ENCODE measurements at regions of chr3 and their contacts with region 1.

Region 1: GRCh38 chr3:63993653-63994079 is 29.6 kb downstream of the PSMD6 start:
- DNase-seq: peak; percentile 63
- ATAC-seq: peak; percentile 88
- H3K4me3 Mint-ChIP-seq: no peak overlapping the region
- H3K27ac Mint-ChIP-seq: peak overlapping the region; percentile 25
- H3K4me1 Mint-ChIP-seq: peaks cover 7% of the 10 kb centered on the region
- H3K27me3 Mint-ChIP-seq: no peaks in the 10 kb centered on the region

Region 2: DNA sequence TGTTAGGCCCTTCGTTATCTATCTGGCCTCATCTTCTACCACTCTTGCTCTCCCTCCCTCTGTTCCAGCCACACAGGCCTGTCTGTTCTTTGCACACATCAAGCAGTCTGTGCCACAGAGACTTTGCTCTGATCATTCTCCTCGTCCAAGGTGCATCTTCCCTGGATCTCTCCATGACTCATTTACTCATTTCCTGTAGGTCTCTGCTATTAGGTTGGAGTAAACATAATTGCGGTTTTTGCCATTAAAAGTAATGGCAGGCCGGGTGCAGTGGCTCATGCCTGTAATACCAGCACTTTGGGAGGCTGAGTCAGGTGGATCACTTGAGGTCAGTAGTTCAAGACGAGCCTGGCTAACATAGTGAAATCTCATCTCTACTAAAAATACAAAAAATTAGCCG is 184.1 kb before region 1 on chr3:
- CTCF ChIA-PET with region 1: no interaction called
- DNase-seq: no peak
- ATAC-seq: no peak
- H3K4me3 Mint-ChIP-seq: no peak overlapping the region
- H3K27ac Mint-ChIP-seq: no peak overlapping the region
- H3K4me1 Mint-ChIP-seq: no peaks in the 10 kb centered on the region
- H3K27me3 Mint-ChIP-seq: no peaks in the 10 kb centered on the region

Region 3: DNA sequence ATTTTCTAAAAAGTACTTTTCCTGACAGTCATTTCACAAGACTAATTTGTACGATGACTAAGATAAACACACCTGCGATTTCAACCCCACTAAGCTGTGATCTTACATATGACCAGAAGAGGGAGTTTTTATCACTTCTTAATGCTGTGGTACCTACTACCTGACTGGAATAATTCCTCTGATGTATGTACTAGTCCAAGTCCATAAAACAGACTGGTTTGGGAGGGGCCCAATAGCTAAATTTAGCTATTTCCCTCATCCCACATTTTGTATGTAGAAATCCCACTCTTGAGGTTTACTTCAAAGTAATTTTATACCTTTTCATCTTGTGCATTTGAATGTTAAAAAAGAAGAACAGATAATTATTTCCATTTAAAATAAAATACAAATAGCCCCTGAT is 31.8 kb before region 1 on chr3:
- CTCF ChIA-PET with region 1: interaction called, 58 read pairs
- DNase-seq: no peak
- ATAC-seq: peak; percentile 82
- H3K4me3 Mint-ChIP-seq: no peak overlapping the region
- H3K27ac Mint-ChIP-seq: no peak overlapping the region
- H3K4me1 Mint-ChIP-seq: peaks cover 53% of the 10 kb centered on the region
- H3K27me3 Mint-ChIP-seq: no peaks in the 10 kb centered on the region

Region 4: DNA sequence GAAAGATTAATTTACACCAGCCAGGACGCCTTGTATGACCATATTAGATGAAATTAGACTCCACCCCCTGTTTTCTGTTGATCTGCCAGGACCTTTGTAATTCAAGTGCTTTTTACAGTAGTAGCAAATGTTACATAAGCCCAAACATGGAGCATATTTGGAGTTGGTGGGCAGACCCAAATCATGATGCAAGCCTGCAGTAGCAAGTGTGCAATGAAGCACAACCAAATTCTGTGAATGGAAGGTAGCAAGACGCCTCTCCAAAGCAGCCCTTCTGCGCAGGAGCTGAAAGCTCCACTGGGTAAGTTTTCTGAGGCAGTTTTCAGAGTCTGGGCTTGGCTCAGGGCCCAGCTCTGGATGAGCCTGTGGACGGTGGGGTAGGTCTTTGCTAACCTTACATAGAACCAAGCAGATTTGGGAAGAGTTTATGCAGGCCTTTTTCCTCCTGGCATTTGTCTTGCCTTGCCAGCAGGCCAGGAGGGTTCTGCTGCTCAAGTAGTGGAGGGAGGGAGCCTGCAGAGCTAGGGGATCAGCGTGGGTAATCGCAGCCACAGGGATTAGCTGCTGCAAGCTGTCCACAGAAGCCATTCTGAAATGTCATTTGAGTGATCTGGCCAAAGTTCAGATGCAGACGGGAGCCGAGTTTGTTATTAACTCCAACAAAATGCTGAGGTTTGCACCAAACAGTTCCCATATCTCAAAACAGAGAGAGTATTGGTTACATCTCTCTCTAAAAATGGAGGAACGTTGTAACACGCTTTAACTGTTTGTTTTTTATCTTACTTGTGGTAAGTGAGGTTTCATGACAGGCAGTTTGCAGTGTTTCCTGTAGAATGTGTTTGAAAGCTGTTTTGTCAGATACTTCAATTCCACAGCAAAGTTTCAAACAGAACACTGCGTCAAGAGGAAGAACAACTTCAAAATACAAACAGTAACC is 25.7 kb before region 1 on chr3:
- CTCF ChIA-PET with region 1: interaction called, 58 read pairs
- DNase-seq: peak; percentile 67
- ATAC-seq: peak; percentile 68
- H3K4me3 Mint-ChIP-seq: peak overlapping the region; percentile 83
- H3K27ac Mint-ChIP-seq: peak overlapping the region; percentile 97
- H3K4me1 Mint-ChIP-seq: peaks cover 86% of the 10 kb centered on the region
- H3K27me3 Mint-ChIP-seq: no peaks in the 10 kb centered on the region

Region 5: DNA sequence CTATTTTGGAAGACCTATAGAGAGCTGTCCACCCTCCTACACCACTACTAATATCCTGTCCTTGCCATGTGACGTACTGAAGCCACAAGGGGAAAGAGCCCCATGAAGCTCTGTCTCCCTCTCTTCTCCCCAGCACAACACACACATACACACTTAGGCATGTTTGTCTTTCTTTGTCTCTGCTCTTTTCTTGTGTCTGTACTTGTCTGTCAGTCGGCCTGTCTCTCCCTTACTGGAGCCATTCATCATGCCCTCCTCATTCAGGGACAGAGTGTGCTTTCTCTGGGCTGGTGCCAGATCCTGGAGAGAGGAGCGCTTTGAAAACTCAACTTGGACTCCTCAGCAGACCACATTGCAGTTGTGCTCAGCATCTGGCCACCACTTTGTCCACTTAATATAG is 17.9 kb before region 1 on chr3:
- CTCF ChIA-PET with region 1: interaction called, 31 read pairs
- DNase-seq: no peak
- ATAC-seq: no peak
- H3K4me3 Mint-ChIP-seq: no peak overlapping the region
- H3K27ac Mint-ChIP-seq: peak overlapping the region; percentile 30
- H3K4me1 Mint-ChIP-seq: peaks cover 94% of the 10 kb centered on the region
- H3K27me3 Mint-ChIP-seq: no peaks in the 10 kb centered on the region

Region 6: DNA sequence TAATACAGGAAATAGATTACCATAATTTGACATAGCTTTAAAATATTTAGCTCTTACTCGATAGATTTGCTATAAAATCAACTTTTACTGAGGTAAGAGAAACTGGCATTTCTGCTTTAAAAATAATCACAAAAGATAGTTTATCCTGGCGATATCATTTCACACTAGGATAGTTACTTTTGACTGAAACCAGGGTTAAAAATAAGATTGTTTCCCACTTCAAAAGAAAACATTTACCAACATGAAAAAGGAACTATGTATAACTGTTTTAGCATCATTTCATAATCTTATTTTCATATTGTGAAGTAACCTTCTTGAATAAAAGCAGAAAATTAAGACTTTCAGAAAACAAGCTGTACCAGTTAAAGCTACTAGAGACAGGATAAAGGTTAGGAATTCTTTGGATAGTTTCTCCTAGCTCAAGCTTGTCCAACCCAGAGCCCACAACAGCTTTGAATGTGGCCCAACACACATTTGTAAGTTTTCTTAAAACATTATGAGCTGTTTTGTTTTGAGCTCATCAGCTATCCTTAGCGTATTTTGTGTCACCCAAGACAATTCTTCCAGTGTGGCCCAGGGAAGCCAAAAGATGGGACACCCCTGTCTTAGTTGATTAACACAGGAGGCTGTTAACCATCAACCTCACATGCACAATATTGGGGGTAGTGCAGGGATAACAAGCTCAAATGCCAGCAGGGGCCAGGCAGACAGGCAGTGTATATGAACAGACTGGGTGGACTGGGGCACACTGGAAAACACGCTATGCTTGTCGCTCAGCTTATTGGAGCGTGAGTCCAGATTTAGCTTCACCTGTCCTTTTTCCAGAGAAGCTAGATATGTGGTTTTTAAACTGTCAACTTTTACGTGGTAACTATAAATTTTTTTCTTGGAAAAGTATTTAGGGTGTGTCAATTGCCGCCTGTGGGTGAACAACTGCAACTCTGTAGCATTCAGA is 14.6 kb after region 1 on chr3:
- CTCF ChIA-PET with region 1: interaction called, 14 read pairs
- DNase-seq: no peak
- ATAC-seq: no peak
- H3K4me3 Mint-ChIP-seq: no peak overlapping the region
- H3K27ac Mint-ChIP-seq: no peak overlapping the region
- H3K4me1 Mint-ChIP-seq: peaks cover 18% of the 10 kb centered on the region
- H3K27me3 Mint-ChIP-seq: no peaks in the 10 kb centered on the region

Region 7: GRCh38 chr3:64023187-64023848 is 29.7 kb after region 1 on chr3 and contains the start of gene PSMD6:
- CTCF ChIA-PET with region 1: interaction called, 17 read pairs
- DNase-seq: peak; percentile 92
- ATAC-seq: peak; percentile 91
- H3K4me3 Mint-ChIP-seq: peak within 1 kb of the TSS; percentile 92
- H3K27ac Mint-ChIP-seq: peak within 1 kb of the TSS; percentile 93
- H3K4me1 Mint-ChIP-seq: peaks cover 30% of the 10 kb centered on the region
- H3K27me3 Mint-ChIP-seq: peaks cover 15% of the 10 kb centered on the region
- total RNA-seq, gene PSMD6: 68.0 to 94.9 TPM